Activated naive CD4-positive, alpha-beta T cell treated with anti-CD3 and anti-CD28 coated beads for 36 hours (primary cell): ENCODE measurements at regions of chr16 and their contacts with region 1.

Region 1: GRCh38 chr16:85821441-85822135 is 22.1 kb downstream of the COX4I1 start:
- DNase-seq: peak; percentile 89
- H3K4me3 Mint-ChIP-seq: no peak overlapping the region
- H3K27ac Mint-ChIP-seq: no peak overlapping the region
- H3K4me1 Mint-ChIP-seq: peaks cover 11% of the 10 kb centered on the region
- H3K27me3 Mint-ChIP-seq: no peaks in the 10 kb centered on the region

Region 2: DNA sequence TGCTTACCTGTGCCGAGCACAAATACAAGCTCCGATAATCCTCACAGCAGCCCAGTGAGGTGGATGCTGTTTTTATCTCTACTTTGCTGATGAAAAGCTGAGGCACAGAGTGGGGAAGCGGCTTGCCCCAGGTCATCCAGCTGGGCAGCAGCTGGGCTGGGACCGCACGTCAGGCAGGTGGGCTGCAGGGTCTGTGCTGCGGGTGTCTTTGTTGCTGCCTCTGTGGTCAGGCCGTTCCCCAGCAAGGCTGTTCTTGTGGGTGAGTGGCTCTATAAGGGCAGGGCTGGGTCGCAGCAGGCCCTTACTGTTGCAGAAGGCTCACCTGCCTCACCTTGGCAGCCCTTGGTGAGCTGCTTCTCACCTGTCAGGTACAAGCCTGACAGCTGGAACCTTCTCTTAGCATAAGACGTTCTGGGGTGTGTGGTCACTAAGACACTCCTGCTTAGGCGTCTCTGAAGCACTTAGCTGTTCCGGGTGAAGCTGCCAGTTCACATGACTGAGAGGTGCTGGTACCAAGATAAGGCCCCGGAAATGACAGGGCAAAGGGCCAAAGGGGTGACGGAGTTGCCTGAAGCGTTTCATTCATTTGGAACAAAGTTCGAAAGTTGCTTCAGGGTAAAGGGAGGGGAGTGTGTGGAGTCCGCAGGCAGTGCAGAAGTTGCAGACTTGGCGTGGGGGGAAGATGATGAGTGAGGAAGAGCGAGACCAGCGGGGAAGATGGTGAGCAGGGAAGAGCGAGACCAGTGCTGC is 94.7 kb after region 1 on chr16:
- CTCF ChIA-PET with region 1: interaction called, 14 read pairs
- intact Hi-C with region 1: no loop called
- DNase-seq: no peak
- H3K4me3 Mint-ChIP-seq: no peak overlapping the region
- H3K27ac Mint-ChIP-seq: peak overlapping the region; percentile 79
- H3K4me1 Mint-ChIP-seq: peaks cover 34% of the 10 kb centered on the region
- H3K27me3 Mint-ChIP-seq: no peaks in the 10 kb centered on the region

Region 3: GRCh38 chr16:85923153-85924021 is 101.8 kb after region 1 on chr16:
- CTCF ChIA-PET with region 1: interaction called, 11 read pairs
- intact Hi-C with region 1: no loop called
- DNase-seq: no peak
- H3K4me3 Mint-ChIP-seq: no peak overlapping the region
- H3K27ac Mint-ChIP-seq: peak overlapping the region; percentile 73
- H3K4me1 Mint-ChIP-seq: peaks cover 47% of the 10 kb centered on the region
- H3K27me3 Mint-ChIP-seq: no peaks in the 10 kb centered on the region

Region 4: DNA sequence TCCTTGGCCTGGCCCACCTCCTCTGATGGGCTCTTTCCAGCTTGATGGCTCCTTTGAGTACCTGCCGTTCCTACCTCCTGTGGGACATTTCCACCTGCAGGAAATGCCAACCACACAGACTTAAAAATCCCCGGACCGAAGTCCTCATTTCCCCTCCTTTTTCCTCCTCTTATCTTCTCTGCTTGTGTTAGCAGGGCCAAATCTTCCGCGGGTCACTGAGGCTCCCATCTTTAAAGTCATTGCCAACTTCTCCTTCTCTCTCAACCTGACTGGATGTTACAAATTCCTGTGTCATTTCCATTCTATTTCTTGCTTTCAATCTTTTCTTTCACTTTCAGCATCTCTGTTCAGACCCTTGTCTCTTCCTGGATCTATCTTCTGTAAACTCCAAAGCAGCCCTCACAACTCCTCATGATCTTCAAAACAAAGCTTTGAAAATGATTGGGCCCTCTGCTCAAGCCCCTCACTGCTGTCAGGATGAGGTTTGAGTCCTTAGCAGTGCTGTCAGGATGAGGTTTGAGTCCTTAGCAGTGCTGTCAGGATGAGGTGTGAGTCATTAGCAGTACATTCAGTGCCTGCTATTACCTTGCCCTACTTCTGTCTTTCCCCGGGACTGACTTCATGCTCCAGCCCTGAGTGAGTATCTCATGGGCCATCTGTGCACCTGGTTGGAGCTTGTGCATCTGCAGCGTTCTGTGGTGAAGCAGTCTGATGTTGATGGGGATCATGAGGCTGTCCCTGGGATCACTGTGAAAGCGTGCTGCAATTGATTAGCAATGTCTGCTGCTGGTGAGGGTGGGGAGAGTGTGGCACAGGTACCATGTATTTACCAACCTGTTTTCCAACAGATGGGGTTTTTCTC is 177.5 kb after region 1 on chr16:
- CTCF ChIA-PET with region 1: interaction called, 14 read pairs
- intact Hi-C with region 1: no loop called
- DNase-seq: peak; percentile 59
- H3K4me3 Mint-ChIP-seq: peak overlapping the region; percentile 0
- H3K27ac Mint-ChIP-seq: peak overlapping the region; percentile 69
- H3K4me1 Mint-ChIP-seq: peaks cover 55% of the 10 kb centered on the region
- H3K27me3 Mint-ChIP-seq: no peaks in the 10 kb centered on the region

Region 5: GRCh38 chr16:86016201-86016871 is 194.7 kb after region 1 on chr16:
- CTCF ChIA-PET with region 1: interaction called, 130 read pairs
- intact Hi-C with region 1: loop called (anchors 1 kb)
- DNase-seq: peak; percentile 67
- H3K4me3 Mint-ChIP-seq: no peak overlapping the region
- H3K27ac Mint-ChIP-seq: no peak overlapping the region
- H3K4me1 Mint-ChIP-seq: peaks cover 21% of the 10 kb centered on the region
- H3K27me3 Mint-ChIP-seq: peaks cover 40% of the 10 kb centered on the region

Region 6: DNA sequence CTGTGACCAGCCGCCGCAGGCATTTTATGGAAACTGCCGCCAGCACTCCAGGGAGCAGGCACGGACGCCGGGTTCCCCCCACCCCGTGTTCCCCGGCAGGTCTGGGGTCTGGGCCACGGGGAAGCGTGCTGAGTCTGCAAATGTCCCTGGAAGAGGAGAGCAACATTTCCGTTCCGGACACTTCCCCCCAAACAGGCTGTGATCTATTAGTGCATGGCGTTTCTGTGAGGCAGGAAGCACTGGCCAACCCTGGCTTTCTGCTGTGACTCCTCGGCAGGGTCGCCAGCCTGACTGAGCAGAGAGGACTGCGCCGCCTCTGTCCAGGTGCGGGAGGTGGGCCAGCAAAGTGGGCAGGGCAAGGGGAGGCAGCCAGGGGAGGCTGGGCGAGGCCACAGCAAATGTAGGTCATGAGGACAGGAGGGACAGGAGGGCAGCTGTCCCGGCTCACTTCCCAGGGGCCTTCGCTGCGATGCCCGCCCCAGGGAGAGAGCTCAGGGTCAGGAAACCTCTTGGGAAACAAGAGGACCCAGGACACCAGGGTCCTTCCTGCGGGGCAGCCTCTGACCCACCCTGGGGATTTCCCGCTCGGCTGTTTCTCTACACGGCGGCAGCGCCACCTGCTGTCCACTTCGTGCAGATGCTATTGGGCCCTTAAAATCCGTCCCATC is 698.2 kb after region 1 on chr16:
- CTCF ChIA-PET with region 1: interaction called, 8 read pairs
- intact Hi-C with region 1: loop called (anchors 2 kb)
- DNase-seq: peak; percentile 62
- H3K4me3 Mint-ChIP-seq: no peak overlapping the region
- H3K27ac Mint-ChIP-seq: no peak overlapping the region
- H3K4me1 Mint-ChIP-seq: peaks cover 3% of the 10 kb centered on the region
- H3K27me3 Mint-ChIP-seq: peaks cover 51% of the 10 kb centered on the region